ENCODE measurements at regions of chr19 and their contacts with region 1.

Region 1: GRCh38 chr19:1057176-1057855 is 9.7 kb upstream of the ARHGAP45 start:
- DNase-seq: peak in 4 of 10 donors; percentile 43 to 63 (median 59)
- ATAC-seq: peak; percentile 54 to 70
- H3K4me3 Mint-ChIP-seq: peak overlapping the region in 5 of 10 donors; percentile 21 to 71 (median 46)
- H3K27ac Mint-ChIP-seq: peak overlapping the region in 9 of 10 donors; percentile 60 to 90 (median 84)
- H3K4me1 Mint-ChIP-seq: peaks cover 17 to 34% (median 21%) of the 10 kb centered on the region in 4 donors
- H3K27me3 Mint-ChIP-seq: no peaks in the 10 kb centered on the region

Region 2: GRCh38 chr19:958967-959820 is 98.1 kb before region 1 on chr19:
- POLR2A ChIA-PET with region 1: no interaction called
- DNase-seq: no peak
- ATAC-seq: no peak
- H3K4me3 Mint-ChIP-seq: peak overlapping the region in 1 of 10 donors; percentile 45
- H3K27ac Mint-ChIP-seq: peak overlapping the region in 2 of 10 donors; percentile 5 to 66
- H3K4me1 Mint-ChIP-seq: peaks cover 0 to 2% (median 0%) of the 10 kb centered on the region in 4 donors
- H3K27me3 Mint-ChIP-seq: no peaks in the 10 kb centered on the region

Region 3: DNA sequence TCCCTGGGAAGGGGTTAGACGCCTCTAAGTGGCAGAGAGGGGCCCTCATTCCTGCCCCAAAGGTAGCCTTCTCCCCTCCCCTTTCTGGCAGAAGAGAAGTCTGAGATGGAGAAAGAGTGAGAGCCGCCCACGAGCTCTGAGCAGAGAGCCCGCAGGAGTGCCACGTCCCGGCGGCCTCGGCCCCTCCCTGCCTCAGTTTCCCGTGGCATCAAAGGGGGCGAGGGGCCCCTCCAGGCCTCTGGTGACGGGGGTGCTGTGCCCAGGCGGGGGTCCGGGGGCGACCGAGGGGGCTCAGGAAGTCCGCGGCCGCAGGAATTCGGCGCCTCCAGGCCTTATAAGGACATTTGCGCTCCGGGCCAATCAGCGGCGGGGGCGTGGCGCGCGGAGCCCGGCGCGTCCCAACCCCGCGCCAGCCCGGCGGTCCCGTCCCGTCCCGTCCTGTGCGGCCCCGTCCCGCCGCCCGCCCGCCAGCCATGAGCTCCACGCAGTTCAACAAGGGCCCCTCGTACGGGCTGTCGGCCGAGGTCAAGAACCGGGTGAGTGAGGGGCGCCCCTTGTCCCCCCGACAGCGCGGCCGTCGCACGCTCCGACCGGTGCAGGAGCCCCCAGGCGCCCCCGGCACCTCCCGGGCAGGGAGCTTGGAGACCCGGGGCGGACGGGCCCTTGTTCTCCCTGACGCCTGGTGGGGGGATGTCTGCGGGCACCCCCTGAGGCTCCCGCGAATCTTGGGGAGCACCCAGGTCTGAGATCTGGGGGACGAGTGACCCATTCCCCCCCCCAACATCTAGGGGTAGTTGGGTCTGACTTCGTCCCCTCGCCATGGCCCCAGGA is 30.9 kb before region 1 on chr19 and contains the start of gene CNN2:
- POLR2A ChIA-PET with region 1: interaction called, 19 read pairs
- DNase-seq: peak in 8 of 10 donors; percentile 46 to 71 (median 56)
- ATAC-seq: peak; percentile 13 to 34
- H3K4me3 Mint-ChIP-seq: peak within 1 kb of the TSS; percentile 94 to 99 (median 98)
- H3K27ac Mint-ChIP-seq: peak within 1 kb of the TSS; percentile 89 to 98 (median 96)
- H3K4me1 Mint-ChIP-seq: peaks cover 13 to 35% (median 27%) of the 10 kb centered on the region in 4 donors
- H3K27me3 Mint-ChIP-seq: peaks cover 0 to 2% (median 0%) of the 10 kb centered on the region in 5 donors
- polyA plus RNA-seq, gene CNN2: 498 to 693 (median 515) TPM

Region 4: GRCh38 chr19:1032264-1032867 is 24.9 kb before region 1 on chr19:
- POLR2A ChIA-PET with region 1: interaction called, 768 read pairs
- DNase-seq: no peak
- ATAC-seq: no peak
- H3K4me3 Mint-ChIP-seq: peak overlapping the region in 4 of 10 donors; percentile 38 to 65 (median 54)
- H3K27ac Mint-ChIP-seq: peak overlapping the region; percentile 68 to 97 (median 88)
- H3K4me1 Mint-ChIP-seq: peaks cover 23 to 54% (median 50%) of the 10 kb centered on the region in 4 donors
- H3K27me3 Mint-ChIP-seq: no peaks in the 10 kb centered on the region

Region 5: DNA sequence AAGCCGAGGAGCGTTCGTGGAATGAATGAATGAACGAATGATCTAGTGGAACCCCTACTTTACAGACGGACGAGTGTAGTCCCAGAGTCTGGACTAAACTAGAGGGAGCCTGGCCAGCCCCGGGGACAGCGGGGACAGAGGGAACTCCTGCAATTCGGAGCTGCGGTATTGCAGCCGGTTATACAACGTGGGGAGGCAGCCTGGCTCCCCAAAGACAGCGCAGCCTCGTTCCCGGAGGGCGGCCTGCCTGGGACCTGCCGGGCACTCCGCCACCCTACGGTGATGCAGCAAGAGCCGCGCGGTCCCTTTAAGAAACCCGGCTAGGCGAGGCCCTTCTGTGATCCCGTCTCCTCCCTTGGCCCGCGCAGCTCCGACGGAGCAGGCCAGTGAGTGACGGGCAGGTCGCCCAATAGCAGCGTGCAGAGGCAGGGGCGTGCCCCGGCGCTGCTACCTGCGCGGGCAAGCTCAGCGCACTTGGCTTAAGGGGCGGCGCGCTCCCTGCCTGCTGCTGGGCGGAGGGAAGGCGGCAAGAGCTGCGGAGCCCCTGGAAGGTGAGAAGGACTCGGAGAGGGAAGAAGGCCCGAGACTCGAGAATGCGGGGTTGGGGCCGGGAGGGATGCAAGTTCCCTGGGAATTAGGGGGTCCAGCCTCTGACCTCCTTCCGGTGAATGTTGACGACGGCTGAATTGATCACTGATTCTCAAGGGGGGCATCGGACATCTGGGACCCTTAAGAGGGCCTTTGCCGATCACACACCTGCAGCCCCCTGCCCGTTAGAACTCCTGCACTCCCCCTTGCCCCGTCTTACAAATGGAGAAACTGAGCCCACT is 17.5 kb before region 1 on chr19 and contains the start of gene ABCA7:
- POLR2A ChIA-PET with region 1: interaction called, 768 read pairs
- DNase-seq: peak; percentile 98 to 100 (median 99)
- ATAC-seq: peak; percentile 86 to 93
- H3K4me3 Mint-ChIP-seq: peak within 1 kb of the TSS; percentile 93 to 100 (median 99)
- H3K27ac Mint-ChIP-seq: peak within 1 kb of the TSS; percentile 92 to 98 (median 94)
- H3K4me1 Mint-ChIP-seq: peaks cover 28 to 63% (median 55%) of the 10 kb centered on the region in 4 donors
- H3K27me3 Mint-ChIP-seq: no peaks in the 10 kb centered on the region
- polyA plus RNA-seq, gene ABCA7: 4.2 to 14.4 (median 8.7) TPM

Region 6: GRCh38 chr19:1045247-1045603 is 12.1 kb before region 1 on chr19:
- POLR2A ChIA-PET with region 1: interaction called, 768 read pairs
- DNase-seq: peak in 5 of 10 donors; percentile 63 to 72 (median 67)
- ATAC-seq: peak; percentile 28 to 74
- H3K4me3 Mint-ChIP-seq: peak overlapping the region in 1 of 10 donors; percentile 35
- H3K27ac Mint-ChIP-seq: peak overlapping the region in 6 of 10 donors; percentile 13 to 76 (median 60)
- H3K4me1 Mint-ChIP-seq: peaks cover 6 to 23% (median 10%) of the 10 kb centered on the region in 4 donors
- H3K27me3 Mint-ChIP-seq: no peaks in the 10 kb centered on the region

Region 7: GRCh38 chr19:1074544-1075283 is 17.4 kb after region 1 on chr19:
- POLR2A ChIA-PET with region 1: interaction called, 2,279 read pairs
- DNase-seq: peak; percentile 91 to 100 (median 95)
- ATAC-seq: peak; percentile 37 to 42
- H3K4me3 Mint-ChIP-seq: peak overlapping the region; percentile 77 to 96 (median 86)
- H3K27ac Mint-ChIP-seq: peak overlapping the region; percentile 97 to 100 (median 99)
- H3K4me1 Mint-ChIP-seq: peaks cover 23 to 63% (median 51%) of the 10 kb centered on the region in 4 donors
- H3K27me3 Mint-ChIP-seq: peaks cover 0 to 4% (median 0%) of the 10 kb centered on the region in 5 donors

Region 8: GRCh38 chr19:1156257-1156801 is 99.0 kb after region 1 on chr19:
- POLR2A ChIA-PET with region 1: no interaction called
- DNase-seq: no peak
- ATAC-seq: no peak
- H3K4me3 Mint-ChIP-seq: no peak overlapping the region
- H3K27ac Mint-ChIP-seq: no peak overlapping the region
- H3K4me1 Mint-ChIP-seq: peaks cover 0 to 8% (median 2%) of the 10 kb centered on the region in 4 donors
- H3K27me3 Mint-ChIP-seq: no peaks in the 10 kb centered on the region